Lower leg skin (tissue), 4 donors: ENCODE measurements at regions of chr2 and their contacts with region 1.

Region 1: DNA sequence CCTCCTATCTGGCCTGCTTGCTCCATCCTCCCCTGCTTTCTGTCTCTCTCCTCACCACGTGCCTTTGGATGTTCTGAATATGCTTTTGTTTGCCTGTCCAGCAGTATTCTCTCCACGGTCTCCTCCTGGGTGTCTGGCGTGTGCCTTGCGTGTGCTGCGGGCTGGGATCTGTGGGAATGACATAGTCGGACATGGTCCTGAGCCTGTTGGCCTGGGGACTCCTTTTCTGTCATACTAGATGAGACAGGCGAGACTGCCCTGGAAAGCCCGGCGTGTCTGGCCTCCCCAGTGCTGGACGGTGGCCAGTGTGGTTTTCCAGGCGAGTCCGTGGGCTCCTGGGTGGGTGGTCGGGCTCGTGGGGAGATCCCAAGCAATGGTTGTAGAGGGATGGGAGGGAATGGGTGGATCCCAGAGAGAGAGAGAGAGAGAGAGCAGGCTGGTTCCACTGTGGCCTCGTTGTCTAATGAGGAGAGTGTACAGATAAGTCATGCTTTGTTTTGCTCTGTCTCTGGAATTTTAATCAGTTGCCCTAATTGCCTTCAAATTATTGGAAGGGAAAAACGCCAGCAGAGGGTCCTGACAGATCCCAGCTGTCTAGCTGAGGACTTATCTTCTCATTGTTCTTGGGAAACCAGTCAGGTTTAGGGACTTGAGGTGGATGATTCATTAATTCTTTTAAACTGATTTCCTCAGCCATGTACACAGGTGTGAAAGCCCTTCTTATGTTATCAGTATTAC is 58.3 kb downstream of the HPCAL1 start:
- DNase-seq: no peak
- H3K4me3 ChIP-seq: no peak overlapping the region
- CTCF ChIP-seq: no peak
- POLR2A ChIP-seq: no peak

Region 2: DNA sequence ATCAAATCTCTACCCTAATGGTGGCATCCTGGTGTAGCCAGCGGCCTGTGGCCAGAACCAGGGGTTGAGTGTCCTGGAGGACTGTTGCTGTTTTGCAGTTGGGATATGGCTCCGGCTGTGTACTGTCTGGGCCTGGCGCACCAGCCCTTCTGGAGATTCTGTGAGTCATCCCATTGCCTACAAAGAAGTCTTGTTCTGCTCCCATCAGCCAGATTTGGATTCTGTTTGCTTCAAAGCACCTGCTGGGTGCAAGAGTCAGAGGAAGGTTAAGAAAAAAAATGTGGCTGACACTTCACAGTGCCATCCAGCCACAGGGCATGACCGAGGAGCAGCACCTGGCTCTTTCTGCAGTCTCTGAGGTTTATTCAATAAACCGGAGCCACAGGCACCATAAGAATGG is 1195.4 kb before region 1 on chr2:
- intact Hi-C with region 1: no loop called
- DNase-seq: no peak
- H3K4me3 ChIP-seq: no peak overlapping the region
- CTCF ChIP-seq: no peak
- POLR2A ChIP-seq: no peak

Region 3: DNA sequence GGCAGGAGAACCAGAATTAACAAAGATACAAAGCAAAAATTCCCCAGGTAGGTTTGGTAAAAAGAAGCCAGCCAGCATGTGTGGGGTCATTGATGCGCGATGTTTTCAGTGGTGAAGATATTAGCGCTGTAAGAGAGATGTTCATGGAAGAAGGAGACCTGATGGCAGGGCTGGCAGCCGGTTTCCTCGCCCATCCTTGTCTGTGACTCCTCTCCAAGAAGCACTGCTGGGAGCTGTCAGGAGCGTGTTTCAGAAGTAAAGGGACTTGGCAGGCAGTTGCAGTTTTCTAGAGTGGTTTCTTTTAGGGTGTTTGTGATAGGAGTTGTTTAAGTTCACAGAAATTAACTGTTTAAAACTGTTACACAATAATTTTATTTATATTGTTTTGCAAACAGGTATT is 493.1 kb before region 1 on chr2:
- intact Hi-C with region 1: loop called (anchors 5 kb)
- DNase-seq: no peak
- H3K4me3 ChIP-seq: no peak overlapping the region
- CTCF ChIP-seq: no peak
- POLR2A ChIP-seq: no peak